A673 (cell line): ENCODE measurements at regions of chr5 and their contacts with region 1.

Region 1: DNA sequence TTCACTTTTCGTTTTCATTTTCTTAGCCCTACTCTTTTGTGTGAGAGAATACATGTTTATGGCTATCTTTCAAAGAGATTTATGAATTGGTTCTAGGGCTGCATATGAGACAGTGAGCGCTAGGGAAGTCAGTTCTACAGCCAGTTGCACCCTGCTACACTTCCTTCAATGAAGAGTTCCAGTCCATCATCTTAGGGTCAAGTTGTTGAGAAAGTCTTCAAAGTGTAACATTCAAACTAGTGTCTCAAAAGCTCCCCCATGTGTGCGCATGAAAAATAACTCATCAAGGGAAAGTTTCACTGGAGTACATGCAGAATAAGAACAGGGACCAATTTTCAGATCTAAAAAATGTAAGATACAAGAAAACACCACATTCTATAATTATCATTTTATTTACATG is 317.2 kb downstream of the DEPDC1B start:
- DNase-seq: peak; percentile 45
- H3K4me3 ChIP-seq: no peak overlapping the region
- H3K27ac ChIP-seq: no peak overlapping the region
- H3K4me1 ChIP-seq: no peaks in the 10 kb centered on the region
- H3K27me3 ChIP-seq: peaks cover 67% of the 10 kb centered on the region
- CTCF ChIP-seq: peak; percentile 55

Region 2: DNA sequence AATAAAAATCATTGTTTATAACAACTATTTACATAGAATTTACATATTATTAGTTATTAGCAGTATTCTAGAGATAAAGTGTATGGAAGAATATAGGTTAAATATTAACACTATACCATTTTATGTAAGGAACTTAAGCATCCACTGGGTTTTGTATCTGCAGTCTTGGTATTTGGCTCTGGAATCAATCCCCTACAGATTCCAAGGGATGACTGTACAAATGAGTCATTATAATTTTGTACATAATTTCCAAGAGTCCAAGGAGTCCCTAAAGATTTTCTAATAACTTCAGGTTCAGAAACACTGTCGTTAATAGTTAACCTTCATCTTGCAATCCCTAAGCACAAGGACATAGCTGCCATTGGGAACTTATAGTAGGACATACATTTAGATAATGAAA is 234.4 kb before region 1 on chr5:
- CTCF ChIA-PET with region 1: no interaction called
- POLR2A ChIA-PET with region 1: no interaction called
- intact Hi-C with region 1: no loop called
- DNase-seq: no peak
- H3K4me3 ChIP-seq: no peak overlapping the region
- H3K27ac ChIP-seq: no peak overlapping the region
- H3K4me1 ChIP-seq: no peaks in the 10 kb centered on the region
- H3K27me3 ChIP-seq: peaks cover 4% of the 10 kb centered on the region
- CTCF ChIP-seq: no peak

Region 3: DNA sequence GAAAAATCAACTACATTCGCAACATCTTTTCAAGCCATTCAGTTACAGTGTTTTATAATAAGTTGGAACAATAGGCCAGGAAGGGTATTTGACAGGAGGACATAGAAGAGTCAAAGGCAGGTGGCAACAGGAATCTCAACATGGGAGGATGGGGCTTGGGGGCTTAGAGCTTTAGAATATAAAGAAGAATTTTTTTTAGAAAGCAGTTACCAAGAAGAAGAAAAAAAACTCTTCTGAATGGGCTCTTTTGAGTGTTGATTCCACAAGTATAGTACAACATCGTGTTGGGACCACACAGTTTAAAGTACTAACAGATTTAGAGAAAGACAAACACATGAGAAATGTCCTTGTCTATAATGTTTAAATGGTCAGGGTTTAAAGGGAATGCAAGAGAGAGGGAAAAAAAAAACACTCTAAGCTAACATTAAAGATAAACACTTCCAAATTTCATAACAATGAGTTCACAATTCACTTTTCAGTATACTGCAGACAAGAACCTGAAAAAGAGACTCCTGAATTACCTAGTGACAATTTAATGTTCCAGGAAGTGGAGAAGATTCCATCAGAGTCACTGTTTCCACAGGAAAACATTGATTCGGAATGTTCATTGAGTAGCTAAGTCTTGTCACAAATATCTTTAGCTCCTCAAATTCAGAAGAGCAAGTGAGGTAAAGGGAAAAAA is 34.9 kb after region 1 on chr5:
- CTCF ChIA-PET with region 1: no interaction called
- POLR2A ChIA-PET with region 1: no interaction called
- intact Hi-C with region 1: no loop called
- DNase-seq: no peak
- H3K4me3 ChIP-seq: no peak overlapping the region
- H3K27ac ChIP-seq: no peak overlapping the region
- H3K4me1 ChIP-seq: no peaks in the 10 kb centered on the region
- H3K27me3 ChIP-seq: no peaks in the 10 kb centered on the region
- CTCF ChIP-seq: no peak

Region 4: GRCh38 chr5:60649283-60649917 is 266.7 kb after region 1 on chr5:
- CTCF ChIA-PET with region 1: no interaction called
- POLR2A ChIA-PET with region 1: no interaction called
- intact Hi-C with region 1: loop called (anchors 10 kb)
- DNase-seq: peak; percentile 48
- H3K4me3 ChIP-seq: no peak overlapping the region
- H3K27ac ChIP-seq: no peak overlapping the region
- H3K4me1 ChIP-seq: no peaks in the 10 kb centered on the region
- H3K27me3 ChIP-seq: no peaks in the 10 kb centered on the region
- CTCF ChIP-seq: peak; percentile 73

Region 5: DNA sequence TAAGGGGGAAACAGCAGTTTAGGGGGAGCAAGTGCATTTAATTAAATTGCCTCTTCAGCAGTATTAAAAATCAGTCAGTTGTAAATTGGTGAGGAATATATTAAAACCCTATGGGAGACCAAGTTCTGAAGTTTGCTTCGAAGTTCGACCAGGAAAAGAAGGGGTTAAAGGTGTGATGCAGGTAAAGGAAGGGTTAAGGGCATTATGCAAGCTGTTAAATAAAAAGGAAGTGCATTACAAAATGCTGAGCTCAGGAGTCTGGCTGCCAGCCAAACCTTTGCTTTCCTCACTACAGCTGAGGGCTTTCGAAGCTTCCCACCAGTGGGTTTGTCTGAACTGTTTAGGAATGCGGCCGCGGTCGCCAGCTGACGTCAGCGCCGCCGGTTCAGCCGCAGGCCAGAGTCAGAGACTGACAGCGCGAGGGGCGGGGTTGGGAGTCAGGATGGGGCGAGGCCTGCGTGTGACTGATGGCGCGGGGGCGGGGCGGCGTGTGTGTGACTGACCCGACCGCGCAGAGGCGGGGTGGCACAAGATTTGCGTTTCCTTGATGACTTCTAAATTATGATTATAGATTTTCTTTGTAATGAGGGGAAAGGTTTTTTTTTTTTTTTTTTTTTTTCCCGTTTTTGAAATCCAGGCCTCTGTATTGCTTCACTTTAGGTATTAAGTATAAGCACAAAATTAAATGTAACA is 1025.9 kb after region 1 on chr5:
- CTCF ChIA-PET with region 1: no interaction called
- POLR2A ChIA-PET with region 1: no interaction called
- intact Hi-C with region 1: no loop called
- DNase-seq: peak; percentile 99
- H3K4me3 ChIP-seq: peak overlapping the region; percentile 33
- H3K27ac ChIP-seq: peak overlapping the region; percentile 32
- H3K4me1 ChIP-seq: peaks cover 44% of the 10 kb centered on the region
- H3K27me3 ChIP-seq: no peaks in the 10 kb centered on the region
- CTCF ChIP-seq: no peak